Left colon (tissue), 2 donors: ENCODE measurements at regions of chr11 and their contacts with region 1.

Region 1: GRCh38 chr11:131064373-131064991 is 148.2 kb upstream of the SNX19 start:
- DNase-seq: peak in 1 of 2 donors; percentile 41
- ATAC-seq: no peak

Region 2: DNA sequence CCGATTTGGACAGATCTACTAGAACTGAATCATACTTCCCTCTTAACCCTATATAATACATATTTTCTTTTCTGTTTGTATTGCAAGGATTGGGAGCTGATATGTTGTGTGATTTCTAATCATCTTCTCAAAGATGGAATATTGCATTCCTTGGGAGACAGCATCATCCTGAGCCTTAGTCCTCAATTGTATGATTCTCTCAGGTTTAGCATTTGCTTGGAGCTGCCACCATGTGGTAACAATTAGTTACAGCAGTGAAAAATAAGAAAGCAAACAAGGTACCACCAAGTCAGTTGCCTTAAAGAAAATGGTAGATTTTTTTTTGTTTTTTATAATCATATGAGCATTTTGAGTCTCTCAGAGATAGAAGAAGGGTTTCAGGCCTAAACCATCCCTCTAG is 160.1 kb before region 1 on chr11:
- intact Hi-C with region 1: no loop called
- DNase-seq: no peak
- ATAC-seq: no peak

Region 3: DNA sequence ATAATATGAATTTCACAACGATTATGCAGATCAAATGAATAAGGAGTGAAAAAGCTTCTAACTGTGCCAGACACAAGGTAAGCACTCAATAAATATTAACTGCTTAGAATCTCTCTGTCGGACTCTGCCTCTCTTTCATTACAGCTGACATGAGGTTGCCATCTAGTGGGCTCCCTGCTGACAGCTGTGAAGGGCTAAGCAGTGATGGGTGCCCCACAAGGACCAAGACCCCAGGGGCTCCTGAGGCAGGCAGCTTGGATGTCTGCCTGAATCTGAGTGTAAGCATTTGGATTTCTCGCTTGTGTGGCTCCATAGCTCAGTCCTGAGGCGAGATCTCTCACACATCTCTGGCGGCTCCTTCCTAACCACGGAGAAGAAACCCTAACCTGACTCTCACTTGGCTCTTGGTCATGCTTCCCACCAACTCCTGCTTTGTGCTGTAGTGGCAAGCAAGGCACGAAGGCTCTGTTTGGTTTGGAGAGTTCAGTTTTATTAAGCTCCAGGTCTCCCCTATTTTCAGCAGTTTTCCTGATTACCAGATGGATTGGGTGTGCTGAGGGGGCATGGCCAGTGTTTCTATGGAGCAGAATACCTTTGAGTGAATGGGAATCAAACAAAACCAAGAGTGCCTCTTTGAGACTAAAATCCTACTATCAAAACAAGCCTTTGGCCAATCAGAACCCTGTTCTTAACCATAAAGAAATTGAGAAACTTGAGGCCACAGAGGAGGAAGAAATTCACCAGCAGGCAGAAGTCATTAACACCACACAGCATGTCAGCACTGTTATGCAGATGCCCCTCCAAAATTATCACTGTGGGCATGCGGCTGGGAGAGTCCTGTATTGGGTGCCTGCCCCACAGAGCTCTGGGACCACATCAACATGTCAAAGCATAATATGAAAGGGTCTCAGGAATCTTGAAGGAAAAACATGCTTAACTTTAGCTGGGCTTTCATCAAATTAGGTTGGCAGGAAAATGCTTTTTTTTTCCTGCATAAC is 153.1 kb after region 1 on chr11:
- intact Hi-C with region 1: loop called in 1 of 2 experiments (anchors 5 kb)
- DNase-seq: no peak
- ATAC-seq: no peak

Region 4: DNA sequence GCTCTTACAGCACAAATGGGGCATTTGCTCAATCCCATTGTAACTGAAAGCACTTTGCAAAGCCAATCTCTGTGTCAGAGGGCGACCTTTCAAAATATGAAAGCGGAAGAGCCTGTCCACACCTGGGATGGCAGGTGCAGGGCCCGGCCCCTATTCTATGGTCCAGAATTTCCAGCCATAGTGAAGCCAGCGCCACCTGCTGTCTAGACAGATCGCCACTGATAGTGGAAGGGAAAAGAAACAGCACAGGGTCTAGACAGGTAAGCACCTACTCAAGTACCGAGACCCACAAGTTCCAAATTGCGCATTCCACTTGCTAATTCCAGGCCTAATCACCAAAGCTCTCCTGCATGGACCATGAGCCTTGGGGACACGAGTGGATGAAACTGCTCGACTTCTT is 447.3 kb after region 1 on chr11:
- intact Hi-C with region 1: loop called in 1 of 2 experiments (anchors 10 kb)
- DNase-seq: peak in 1 of 2 donors; percentile 63
- ATAC-seq: peak; percentile 65

Region 5: DNA sequence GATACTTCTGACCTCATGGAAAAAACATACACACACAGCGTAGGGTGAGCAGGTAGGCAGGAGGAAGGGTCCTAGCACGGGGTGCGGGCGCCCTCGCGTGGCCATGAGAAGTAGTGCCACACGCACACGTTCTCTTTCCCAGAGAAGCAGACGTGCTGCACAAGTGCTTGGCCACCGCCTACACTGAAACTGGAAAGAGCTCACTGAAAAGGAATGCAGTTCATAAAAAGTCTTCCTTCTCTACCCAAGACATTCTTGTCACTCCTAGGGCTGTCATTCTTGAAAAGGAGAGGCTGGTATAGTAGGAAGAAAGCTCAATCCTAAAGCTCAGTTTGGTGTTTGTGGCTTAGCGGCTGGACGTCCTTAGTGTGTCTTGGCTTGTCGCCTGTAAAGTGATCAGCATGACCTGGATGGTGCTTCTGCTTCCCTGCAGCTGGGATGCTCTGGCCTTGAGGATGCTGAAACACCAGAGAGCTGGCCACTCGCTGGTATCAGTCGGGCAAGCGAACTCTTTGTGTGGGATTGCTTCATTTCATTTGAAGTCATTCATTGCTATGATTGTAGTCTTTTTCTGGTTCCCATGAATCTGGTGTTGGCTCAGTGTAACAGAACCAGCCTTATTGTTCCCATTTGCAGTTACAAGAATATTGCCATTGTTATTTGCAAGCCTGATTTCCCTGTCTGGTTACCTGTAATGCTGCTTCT is 609.7 kb after region 1 on chr11:
- intact Hi-C with region 1: loop called in 1 of 2 experiments (anchors 5 kb)
- DNase-seq: peak in 1 of 2 donors; percentile 55
- ATAC-seq: peak; percentile 78